ENCODE measurements at regions of chr11 and their contacts with region 1.

Region 1: GRCh38 chr11:66677599-66678375 is at the start of gene RBM4B:
- DNase-seq: peak; percentile 97
- ATAC-seq: peak; percentile 91
- H3K4me3 Mint-ChIP-seq: peak within 1 kb of the TSS; percentile 88
- H3K27ac Mint-ChIP-seq: peak within 1 kb of the TSS; percentile 94
- H3K4me1 Mint-ChIP-seq: peaks cover 36% of the 10 kb centered on the region
- H3K27me3 Mint-ChIP-seq: no peaks in the 10 kb centered on the region
- total RNA-seq, gene RBM4B: 14.7 to 20.9 TPM

Region 2: DNA sequence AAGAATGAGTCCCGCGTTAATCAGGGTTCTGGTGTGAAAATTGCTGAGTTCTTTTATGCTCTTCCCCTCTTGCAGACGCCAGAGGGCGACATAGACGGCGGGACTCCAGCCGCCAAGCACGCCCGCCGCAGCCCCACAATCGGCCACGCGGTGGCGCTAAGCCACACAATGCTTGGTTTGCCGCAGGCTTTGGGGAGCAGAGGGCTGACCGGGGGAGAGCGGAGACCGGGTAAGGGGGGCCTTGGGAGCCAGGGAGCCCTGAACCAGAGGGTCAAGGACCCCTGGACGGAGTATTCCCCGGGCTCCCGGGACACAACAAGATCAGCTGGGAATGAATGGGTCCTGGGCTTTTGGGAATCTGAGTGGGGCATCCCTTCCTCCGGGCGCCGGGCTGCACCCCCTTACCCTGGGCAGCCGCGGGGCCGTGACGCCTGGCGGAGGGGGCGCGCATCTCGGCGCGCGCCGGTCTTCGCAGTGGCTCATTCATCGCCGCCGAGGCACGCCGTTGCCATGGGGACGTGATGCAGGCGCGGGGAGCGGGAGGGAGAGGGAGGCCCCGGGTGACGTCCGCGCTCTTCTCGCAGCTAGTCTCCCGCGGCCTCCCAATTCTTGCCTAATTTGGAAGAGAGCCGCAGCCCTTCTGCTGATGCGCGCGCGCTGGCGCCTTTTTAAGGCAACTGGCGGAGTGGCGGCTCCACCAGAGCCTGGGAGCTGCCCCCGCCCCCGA is 269.1 kb before region 1 on chr11:
- CTCF ChIA-PET with region 1: interaction called, 36 read pairs
- DNase-seq: peak; percentile 92
- ATAC-seq: peak; percentile 88
- H3K4me3 Mint-ChIP-seq: peak overlapping the region; percentile 63
- H3K27ac Mint-ChIP-seq: peak overlapping the region; percentile 34
- H3K4me1 Mint-ChIP-seq: peaks cover 3% of the 10 kb centered on the region
- H3K27me3 Mint-ChIP-seq: peaks cover 35% of the 10 kb centered on the region

Region 3: DNA sequence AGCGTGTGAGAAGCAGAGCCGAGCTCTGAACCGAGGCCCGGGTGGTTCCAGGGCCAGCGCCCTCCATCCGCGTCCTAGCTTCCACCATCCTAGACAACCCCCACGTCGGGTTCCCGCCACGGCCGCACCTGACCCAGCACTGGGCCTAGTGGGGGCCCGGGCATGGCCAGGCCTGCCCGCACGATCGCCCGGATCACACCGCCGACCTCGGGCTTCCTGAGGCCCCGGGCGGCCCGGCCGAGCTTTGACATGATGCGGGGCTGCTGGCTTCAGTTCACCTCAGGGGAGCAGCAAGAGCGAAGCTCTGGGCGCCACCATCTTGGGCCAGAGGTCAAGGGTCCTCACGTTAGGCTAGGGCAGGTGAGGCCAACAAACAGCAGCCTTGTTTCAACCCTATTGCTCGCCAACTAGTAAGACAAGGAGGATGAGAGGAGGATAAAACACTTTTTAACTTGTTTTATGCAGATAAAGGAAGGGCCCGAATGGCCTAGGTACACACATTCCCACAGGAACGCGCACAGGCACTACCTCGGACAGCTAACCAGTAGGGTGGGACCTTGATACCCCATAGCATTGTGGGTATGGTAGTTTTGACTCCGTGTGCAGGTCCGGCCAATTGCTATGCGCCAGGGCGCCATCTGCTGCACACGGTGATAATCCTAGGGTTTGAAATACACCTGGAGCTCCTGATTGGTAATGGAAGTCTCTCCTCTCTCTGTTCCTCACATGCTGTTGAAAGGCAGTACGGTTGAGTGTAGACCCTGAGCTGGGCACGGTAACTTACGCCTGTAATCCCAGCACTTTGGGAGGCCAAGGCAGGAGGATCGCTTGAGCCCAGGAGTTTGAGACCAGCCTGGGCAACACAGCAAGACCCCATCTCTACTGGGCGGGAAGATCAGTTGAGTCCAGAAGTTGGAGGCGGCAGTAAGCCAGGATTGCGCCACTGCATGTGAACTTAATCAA is 239.0 kb before region 1 on chr11 and contains the start of gene MRPL11:
- CTCF ChIA-PET with region 1: interaction called, 23 read pairs
- DNase-seq: peak; percentile 93
- ATAC-seq: peak; percentile 98
- H3K4me3 Mint-ChIP-seq: peak within 1 kb of the TSS; percentile 92
- H3K27ac Mint-ChIP-seq: peak within 1 kb of the TSS; percentile 92
- H3K4me1 Mint-ChIP-seq: peaks cover 21% of the 10 kb centered on the region
- H3K27me3 Mint-ChIP-seq: no peaks in the 10 kb centered on the region
- total RNA-seq, gene MRPL11: 75.5 to 91.3 TPM

Region 4: DNA sequence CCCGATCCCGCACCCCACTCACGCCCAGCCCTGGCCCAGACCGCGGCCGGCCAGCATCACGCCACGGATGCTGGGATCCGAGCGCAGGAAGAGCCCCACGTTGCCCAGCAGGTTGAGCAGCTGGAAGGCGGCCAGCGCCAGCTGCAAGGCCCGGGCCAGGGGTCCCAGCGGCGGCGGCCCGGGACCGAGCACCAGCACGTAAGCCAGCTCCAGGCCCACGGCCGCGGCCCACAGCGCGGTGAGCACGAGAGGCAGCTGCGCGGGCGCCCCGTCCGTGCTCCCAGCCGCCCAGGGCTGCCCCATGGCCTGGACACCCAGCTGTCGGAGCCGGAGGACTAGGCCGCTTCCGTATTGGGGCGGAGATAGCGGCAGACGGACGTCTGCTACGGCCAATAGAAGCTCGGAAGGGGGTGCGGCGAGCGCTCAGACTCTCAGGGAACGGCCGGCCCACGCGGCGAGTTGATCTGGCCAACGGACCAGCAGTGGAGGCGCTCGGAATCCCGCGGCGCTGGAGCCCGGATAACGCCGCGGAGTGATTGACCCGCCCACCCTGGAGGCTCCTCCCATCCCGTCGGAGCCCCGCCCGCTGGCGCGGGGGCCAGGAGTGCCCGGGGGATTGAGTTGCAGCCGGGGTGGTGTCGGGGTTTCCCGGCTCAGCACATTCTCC is 132.0 kb before region 1 on chr11 and contains the start of gene ZDHHC24:
- CTCF ChIA-PET with region 1: interaction called, 23 read pairs
- DNase-seq: peak; percentile 95
- ATAC-seq: peak; percentile 90
- H3K4me3 Mint-ChIP-seq: peak within 1 kb of the TSS; percentile 86
- H3K27ac Mint-ChIP-seq: peak within 1 kb of the TSS; percentile 75
- H3K4me1 Mint-ChIP-seq: peaks cover 30% of the 10 kb centered on the region
- H3K27me3 Mint-ChIP-seq: peaks cover 11% of the 10 kb centered on the region
- total RNA-seq, gene ZDHHC24: 18.7 to 19.8 TPM

Region 5: GRCh38 chr11:66579017-66579606 is 98.7 kb before region 1 on chr11:
- CTCF ChIA-PET with region 1: interaction called, 107 read pairs
- DNase-seq: peak; percentile 78
- ATAC-seq: peak; percentile 80
- H3K4me3 Mint-ChIP-seq: no peak overlapping the region
- H3K27ac Mint-ChIP-seq: no peak overlapping the region
- H3K4me1 Mint-ChIP-seq: peaks cover 6% of the 10 kb centered on the region
- H3K27me3 Mint-ChIP-seq: peaks cover 14% of the 10 kb centered on the region

Region 6: DNA sequence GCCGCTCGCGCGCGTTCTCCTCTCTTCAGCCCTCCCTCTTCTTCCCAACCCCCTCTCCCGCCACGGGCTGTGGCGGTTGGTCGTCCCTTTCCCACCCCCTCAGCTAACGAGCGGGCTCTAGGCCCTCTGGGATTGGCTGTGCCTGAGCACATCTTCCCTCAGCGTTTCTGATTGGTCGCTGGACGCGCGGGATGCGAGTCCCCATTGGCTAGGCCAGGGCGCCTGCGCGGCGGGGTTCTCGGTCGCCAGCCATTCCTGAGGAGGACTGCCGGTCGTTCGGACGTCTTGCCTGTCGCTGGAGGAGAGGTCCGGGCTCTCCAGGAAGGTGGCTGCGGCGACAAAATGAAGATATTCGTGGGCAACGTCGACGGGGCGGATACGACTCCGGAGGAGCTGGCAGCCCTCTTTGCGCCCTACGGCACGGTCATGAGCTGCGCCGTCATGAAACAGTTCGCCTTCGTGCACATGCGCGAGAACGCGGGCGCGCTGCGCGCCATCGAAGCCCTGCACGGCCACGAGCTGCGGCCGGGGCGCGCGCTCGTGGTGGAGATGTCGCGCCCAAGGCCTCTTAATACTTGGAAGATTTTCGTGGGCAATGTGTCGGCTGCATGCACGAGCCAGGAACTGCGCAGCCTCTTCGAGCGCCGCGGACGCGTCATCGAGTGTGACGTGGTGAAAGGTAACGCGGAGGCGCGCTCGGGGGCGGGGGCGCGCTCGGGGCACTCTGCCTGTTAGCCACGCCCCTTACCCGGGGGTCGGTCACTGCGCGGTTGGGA is 61.2 kb before region 1 on chr11 and contains the start of gene RBM14:
- CTCF ChIA-PET with region 1: interaction called, 35 read pairs
- DNase-seq: peak; percentile 99
- ATAC-seq: peak; percentile 94
- H3K4me3 Mint-ChIP-seq: peak within 1 kb of the TSS; percentile 98
- H3K27ac Mint-ChIP-seq: peak within 1 kb of the TSS; percentile 98
- H3K4me1 Mint-ChIP-seq: peaks cover 41% of the 10 kb centered on the region
- H3K27me3 Mint-ChIP-seq: no peaks in the 10 kb centered on the region
- total RNA-seq, gene RBM14: 152 to 176 TPM

Region 7: DNA sequence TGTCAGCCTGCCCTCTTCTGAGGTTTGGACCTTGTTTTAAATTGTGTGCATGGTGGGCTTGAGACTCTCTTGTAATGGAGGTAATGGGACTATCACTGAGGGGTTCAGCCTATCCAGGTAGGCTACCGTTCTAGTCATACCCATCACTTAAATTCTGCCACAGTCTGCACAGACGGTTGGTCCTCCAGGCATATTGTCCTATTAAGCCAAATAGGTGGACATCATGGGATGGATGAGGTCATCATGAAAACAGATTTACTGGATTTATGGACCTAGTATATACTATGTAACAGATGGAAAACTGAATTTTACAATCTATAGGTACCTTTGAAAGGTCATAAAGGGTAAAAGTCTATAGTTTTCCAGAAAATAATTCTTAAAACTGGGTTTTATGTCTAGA is 48.4 kb before region 1 on chr11:
- CTCF ChIA-PET with region 1: no interaction called
- DNase-seq: no peak
- ATAC-seq: no peak
- H3K4me3 Mint-ChIP-seq: no peak overlapping the region
- H3K27ac Mint-ChIP-seq: no peak overlapping the region
- H3K4me1 Mint-ChIP-seq: peaks cover 14% of the 10 kb centered on the region
- H3K27me3 Mint-ChIP-seq: no peaks in the 10 kb centered on the region

Region 8: GRCh38 chr11:66659763-66660162 is 18.0 kb before region 1 on chr11:
- CTCF ChIA-PET with region 1: interaction called, 10 read pairs
- DNase-seq: no peak
- ATAC-seq: no peak
- H3K4me3 Mint-ChIP-seq: no peak overlapping the region
- H3K27ac Mint-ChIP-seq: peak overlapping the region; percentile 1
- H3K4me1 Mint-ChIP-seq: peaks cover 4% of the 10 kb centered on the region
- H3K27me3 Mint-ChIP-seq: no peaks in the 10 kb centered on the region